Activated B cell treated with CpG ODN at 0.5 μM for 24 hours (primary cell): ENCODE measurements at regions of chr12 and their contacts with region 1.

Region 1: GRCh38 chr12:113174461-113175384 is 10.6 kb downstream of the DDX54 start:
- DNase-seq: peak; percentile 78
- ATAC-seq: peak; percentile 81
- H3K4me3 Mint-ChIP-seq: no peak overlapping the region
- H3K27ac Mint-ChIP-seq: no peak overlapping the region
- H3K4me1 Mint-ChIP-seq: peaks cover 32% of the 10 kb centered on the region
- H3K27me3 Mint-ChIP-seq: no peaks in the 10 kb centered on the region
- CTCF ChIP-seq: peak; percentile 95

Region 2: DNA sequence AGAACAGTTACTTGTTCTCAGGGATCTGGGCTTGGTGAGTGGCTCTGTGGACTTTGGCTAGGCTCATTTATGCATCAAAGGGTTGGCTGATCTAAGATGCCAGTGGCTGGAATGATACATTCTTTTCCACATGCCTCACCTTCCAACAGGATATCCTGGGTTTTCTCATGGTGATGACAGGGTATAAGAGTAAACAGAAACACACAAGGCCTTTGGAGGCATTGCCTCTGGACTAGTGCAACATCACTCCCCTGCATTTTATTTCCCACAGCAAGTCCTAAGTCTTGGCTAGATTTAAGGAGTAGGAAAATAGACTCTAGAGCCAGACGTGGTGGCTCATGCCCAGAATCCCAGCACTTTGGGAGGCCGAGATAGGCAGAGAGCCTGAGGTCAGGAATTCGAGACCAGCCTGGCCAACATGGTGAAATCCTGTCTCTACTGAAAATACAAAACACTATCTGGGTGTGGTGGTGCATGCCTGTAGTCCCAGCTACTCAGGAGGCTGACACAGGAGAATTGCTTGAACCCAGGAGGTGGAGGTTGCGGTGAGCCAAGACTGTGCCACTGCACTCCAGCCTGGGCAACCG is 335.2 kb before region 1 on chr12:
- CTCF ChIA-PET with region 1: no interaction called
- POLR2A ChIA-PET with region 1: no interaction called
- intact Hi-C with region 1: no loop called
- DNase-seq: no peak
- ATAC-seq: no peak
- H3K4me3 Mint-ChIP-seq: no peak overlapping the region
- H3K27ac Mint-ChIP-seq: no peak overlapping the region
- H3K4me1 Mint-ChIP-seq: no peaks in the 10 kb centered on the region
- H3K27me3 Mint-ChIP-seq: peaks cover 23% of the 10 kb centered on the region
- CTCF ChIP-seq: no peak

Region 3: GRCh38 chr12:112992541-112993398 is 182.0 kb before region 1 on chr12:
- CTCF ChIA-PET with region 1: interaction called, 24 read pairs
- POLR2A ChIA-PET with region 1: no interaction called
- intact Hi-C with region 1: loop called (anchors 1 kb)
- DNase-seq: no peak
- ATAC-seq: peak; percentile 72
- H3K4me3 Mint-ChIP-seq: no peak overlapping the region
- H3K27ac Mint-ChIP-seq: peak overlapping the region; percentile 59
- H3K4me1 Mint-ChIP-seq: peaks cover 29% of the 10 kb centered on the region
- H3K27me3 Mint-ChIP-seq: no peaks in the 10 kb centered on the region
- CTCF ChIP-seq: peak; percentile 34

Region 4: GRCh38 chr12:113092607-113093408 is 81.9 kb before region 1 on chr12:
- CTCF ChIA-PET with region 1: interaction called, 35 read pairs
- POLR2A ChIA-PET with region 1: interaction called, 5 read pairs
- intact Hi-C with region 1: loop called (anchors 1 kb)
- DNase-seq: no peak
- ATAC-seq: peak; percentile 65
- H3K4me3 Mint-ChIP-seq: peak overlapping the region; percentile 80
- H3K27ac Mint-ChIP-seq: peak overlapping the region; percentile 82
- H3K4me1 Mint-ChIP-seq: peaks cover 55% of the 10 kb centered on the region
- H3K27me3 Mint-ChIP-seq: no peaks in the 10 kb centered on the region
- CTCF ChIP-seq: no peak

Region 5: DNA sequence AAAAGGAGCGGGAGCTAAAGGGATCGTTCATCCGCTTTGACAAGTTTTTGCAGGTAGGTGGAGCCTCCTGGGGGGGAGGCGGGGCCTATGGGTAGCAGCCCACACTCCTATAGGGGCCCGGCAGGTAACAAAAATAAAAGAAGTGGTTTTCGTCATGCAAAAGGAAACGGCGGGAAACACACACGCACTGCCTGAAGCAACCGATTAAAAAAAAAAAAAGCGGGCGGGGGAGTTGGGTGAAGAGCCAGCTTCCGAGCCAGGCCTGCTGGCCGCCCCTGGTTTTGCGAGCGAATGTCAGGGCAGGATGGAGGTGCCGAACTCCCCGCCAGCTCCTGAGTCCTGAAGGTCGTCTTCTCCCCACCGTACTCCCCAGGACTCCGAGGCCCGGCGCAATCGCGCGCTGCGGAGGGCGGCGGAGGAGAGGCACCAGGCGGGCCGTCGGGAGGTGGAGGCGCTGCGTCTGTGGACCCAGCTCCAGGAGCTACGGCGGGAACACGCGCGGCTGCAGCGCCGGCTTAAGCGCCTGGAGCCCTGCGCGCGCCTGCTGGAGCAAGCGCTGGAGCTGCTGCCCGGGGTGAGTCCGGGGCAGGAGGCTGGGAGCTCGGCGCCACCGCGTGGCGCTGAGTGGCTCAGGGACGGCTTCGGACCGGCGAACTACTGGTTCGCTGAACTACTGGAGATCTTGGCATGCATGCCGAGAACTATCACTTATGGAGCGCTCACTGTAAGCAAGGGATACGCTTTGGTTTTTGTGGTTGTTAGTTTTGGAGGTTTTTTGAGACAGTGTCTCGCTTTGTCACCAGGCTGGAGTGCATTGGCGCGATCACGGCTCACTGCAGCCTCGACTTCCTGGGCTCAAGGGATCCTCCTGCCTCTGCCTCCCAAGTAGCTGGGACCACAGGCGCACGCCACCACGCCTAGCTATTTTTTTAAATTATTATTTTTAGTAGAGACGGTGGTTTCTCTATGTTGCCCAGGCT is 21.6 kb before region 1 on chr12:
- CTCF ChIA-PET with region 1: interaction called, 19 read pairs
- POLR2A ChIA-PET with region 1: interaction called, 8 read pairs
- intact Hi-C with region 1: loop called (anchors 2 kb)
- DNase-seq: peak; percentile 45
- ATAC-seq: peak; percentile 66
- H3K4me3 Mint-ChIP-seq: peak overlapping the region; percentile 80
- H3K27ac Mint-ChIP-seq: no peak overlapping the region
- H3K4me1 Mint-ChIP-seq: peaks cover 24% of the 10 kb centered on the region
- H3K27me3 Mint-ChIP-seq: peaks cover 8% of the 10 kb centered on the region
- CTCF ChIP-seq: no peak

Region 6: GRCh38 chr12:113633678-113634332 is 459.1 kb after region 1 on chr12:
- CTCF ChIA-PET with region 1: no interaction called
- POLR2A ChIA-PET with region 1: no interaction called
- intact Hi-C with region 1: no loop called
- DNase-seq: no peak
- ATAC-seq: no peak
- H3K4me3 Mint-ChIP-seq: no peak overlapping the region
- H3K27ac Mint-ChIP-seq: no peak overlapping the region
- H3K4me1 Mint-ChIP-seq: no peaks in the 10 kb centered on the region
- H3K27me3 Mint-ChIP-seq: peaks cover 14% of the 10 kb centered on the region
- CTCF ChIP-seq: no peak